Left colon (tissue), 2 donors: ENCODE measurements at regions of chr12 and their contacts with region 1.

Region 1: GRCh38 chr12:125533434-125534029 is 468.3 kb downstream of the AACS start:
- DNase-seq: peak in 1 of 2 donors; percentile 43
- ATAC-seq: peak; percentile 83

Region 2: DNA sequence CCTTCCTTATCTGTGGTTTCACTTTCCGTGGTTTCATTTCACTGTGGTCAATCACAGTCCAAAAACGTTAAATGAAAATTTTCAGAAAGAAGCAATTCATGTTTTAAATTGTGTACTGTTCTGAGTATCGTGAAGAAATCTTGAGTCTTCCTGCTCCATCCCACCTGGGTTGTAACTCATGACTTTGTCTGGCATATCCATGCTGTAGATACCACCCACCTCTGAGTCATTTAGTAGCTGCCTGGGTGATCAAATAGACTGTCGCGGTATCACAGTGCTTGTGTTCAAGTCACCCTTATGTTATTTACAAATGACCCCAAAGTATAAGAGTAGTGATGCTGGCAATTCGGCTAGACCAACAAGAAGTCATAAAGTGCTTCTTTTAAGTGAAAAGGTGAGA is 52.9 kb after region 1 on chr12:
- intact Hi-C with region 1: no loop called
- DNase-seq: no peak
- ATAC-seq: no peak

Region 3: DNA sequence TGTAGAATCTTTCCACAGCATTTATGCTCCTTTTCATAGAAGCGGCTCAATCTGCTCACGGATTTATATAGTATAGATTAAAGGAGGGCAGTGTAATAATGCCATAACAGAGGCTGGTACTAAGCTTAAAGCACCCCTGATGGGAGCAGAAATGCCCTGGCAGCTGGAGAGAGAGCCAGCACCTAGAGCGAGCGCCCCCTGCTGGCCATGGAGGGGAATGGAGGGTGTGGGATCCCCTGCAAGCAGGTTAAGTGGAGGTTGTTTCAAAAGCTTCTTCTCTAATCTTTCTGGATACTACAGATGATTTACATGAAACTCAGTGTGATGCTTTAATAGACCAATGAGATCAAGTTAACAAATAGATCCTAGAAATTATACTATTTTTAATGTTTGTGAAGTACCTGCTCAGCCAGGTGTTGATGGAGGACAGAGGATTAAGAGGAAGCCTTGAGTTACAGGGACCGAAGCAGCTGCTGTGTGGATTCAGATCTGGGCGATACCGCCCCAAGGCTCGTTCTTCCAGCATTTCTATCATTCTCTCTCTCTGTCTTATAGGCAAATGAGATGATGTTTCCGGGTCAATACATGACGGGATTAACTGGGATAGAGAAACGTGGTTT is 1214.1 kb after region 1 on chr12:
- intact Hi-C with region 1: loop called in 1 of 2 experiments (anchors 10 kb)
- DNase-seq: peak in 1 of 2 donors; percentile 44
- ATAC-seq: no peak

Region 4: GRCh38 chr12:126874427-126875026 is 1341.0 kb after region 1 on chr12:
- intact Hi-C with region 1: loop called in 1 of 2 experiments (anchors 5 kb)
- DNase-seq: peak; percentile 35 to 70
- ATAC-seq: peak; percentile 90